ENCODE measurements at regions of chr6 and their contacts with region 1.

Region 1: GRCh38 chr6:12012558-12013306 is 620 bp downstream of the HIVEP1 start:
- DNase-seq: peak; percentile 63
- H3K27ac ChIP-seq: peak overlapping the region; percentile 98
- CTCF ChIP-seq: no peak

Region 2: DNA sequence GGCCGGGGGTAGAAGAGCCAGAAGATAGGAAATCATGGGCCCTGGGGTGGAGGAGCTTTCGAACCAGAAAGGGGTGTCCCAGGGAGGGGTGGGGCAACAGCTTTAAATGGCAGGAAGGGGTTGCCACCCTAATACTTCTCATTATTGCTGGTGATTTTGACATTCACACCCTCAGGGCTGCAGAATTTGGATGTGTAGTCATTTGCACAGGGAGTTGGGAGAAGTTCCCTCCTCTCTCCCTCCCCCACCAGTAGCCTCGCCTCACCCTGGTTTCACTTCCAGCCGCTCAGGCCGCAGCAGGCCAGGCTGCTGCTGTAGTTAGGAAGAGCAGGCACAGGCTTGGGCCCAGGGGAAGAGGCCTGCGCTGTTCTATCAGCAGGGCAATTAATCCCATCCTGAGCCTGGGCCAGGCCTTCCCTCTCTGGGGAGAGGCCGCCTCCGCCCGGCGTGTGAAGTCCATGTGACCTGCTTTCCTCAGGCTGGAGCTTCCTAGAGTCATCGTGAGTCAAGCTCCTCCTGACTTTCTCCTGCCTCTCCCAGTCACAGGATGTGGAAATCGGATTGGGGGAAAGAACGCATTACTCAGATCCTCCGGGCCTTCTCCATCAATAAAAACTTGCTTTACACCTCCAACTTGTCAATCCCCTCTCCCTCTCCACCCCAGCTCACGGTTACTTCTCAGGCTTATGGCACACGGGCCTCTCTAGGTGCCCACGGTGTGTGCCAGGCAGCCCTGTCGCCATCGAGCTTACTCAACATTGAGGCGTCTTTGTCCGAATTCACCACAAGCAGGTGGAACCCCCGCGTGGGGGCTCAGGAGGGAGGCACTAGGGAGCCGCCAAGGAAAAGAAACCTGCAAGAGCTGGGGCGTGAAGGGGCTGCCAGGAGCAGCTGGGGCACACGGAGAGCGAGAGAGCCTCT is 241.9 kb before region 1 on chr6:
- CTCF ChIA-PET with region 1: no interaction called
- POLR2A ChIA-PET with region 1: interaction called, 13 read pairs
- DNase-seq: peak; percentile 96
- H3K27ac ChIP-seq: peak overlapping the region; percentile 100
- CTCF ChIP-seq: no peak

Region 3: DNA sequence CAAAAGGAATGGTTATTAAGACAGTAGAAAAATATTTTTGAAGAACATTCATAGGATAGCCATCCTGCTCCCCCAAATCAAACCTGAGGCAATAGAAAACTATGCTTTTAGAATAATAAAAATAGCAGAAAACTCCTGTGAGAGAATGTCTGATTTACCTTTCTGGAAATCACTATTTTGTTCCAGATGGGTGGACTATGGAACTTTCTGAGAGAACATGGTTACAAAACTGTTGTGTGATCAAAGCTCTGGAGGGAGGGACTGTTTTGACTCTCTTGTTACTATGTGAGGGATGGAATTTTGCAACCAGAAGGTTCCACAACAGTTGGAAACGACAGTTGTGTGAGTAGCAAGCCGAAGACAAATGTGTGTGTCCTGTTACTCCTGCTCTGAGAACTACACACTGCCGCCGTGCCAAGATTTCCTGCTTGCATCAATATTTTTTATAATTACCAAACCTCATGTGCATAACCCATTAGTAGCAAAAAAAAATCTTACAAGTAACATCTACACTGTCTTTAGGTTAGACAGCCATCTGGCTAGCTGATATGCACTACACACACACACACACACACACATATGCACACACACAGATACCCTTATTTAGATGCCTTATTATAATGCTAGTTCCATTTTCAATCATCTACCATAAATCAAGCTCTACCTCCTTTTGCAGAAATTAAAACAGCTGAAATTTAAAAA is 11.6 kb before region 1 on chr6:
- CTCF ChIA-PET with region 1: interaction called, 3 read pairs
- POLR2A ChIA-PET with region 1: interaction called, 11 read pairs
- DNase-seq: no peak
- H3K27ac ChIP-seq: no peak overlapping the region
- CTCF ChIP-seq: no peak

Region 4: GRCh38 chr6:12075067-12075563 is 62.4 kb after region 1 on chr6:
- CTCF ChIA-PET with region 1: no interaction called
- POLR2A ChIA-PET with region 1: no interaction called
- DNase-seq: no peak
- H3K27ac ChIP-seq: no peak overlapping the region
- CTCF ChIP-seq: no peak; the same call in 1 of the 2 replicates

Measured in RWPE1 (cell line).